ENCODE measurements at regions of chr17 and their contacts with region 1.

Region 1: DNA sequence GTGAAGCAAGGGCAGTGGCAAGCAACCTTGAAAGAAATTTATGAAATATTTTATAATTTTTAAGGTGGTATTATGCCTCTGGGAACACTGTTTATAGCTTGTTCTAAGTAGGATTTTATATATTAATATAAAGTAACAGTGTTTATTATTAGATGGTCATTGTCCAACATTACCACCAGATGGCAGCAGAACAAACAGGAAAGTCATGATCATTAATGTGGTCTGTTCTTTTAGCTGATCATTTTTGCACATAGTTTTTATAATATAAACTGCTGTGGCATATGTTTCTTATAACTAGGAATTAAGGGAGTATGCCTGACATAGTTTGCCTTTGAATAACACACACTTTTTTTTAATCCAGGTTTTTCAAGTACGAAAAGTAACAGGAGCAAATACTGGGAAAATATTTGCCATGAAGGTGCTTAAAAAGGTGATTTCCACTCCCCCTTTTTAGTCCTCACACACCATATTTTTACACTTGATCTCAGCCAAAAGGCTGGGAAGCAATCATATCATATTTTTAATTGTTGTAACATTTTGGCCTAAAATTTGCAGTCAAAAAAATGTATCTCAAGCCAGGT is 21.4 kb downstream of the RPS6KB1 start:
- DNase-seq: no peak
- ATAC-seq: peak; percentile 77
- H3K4me3 ChIP-seq: no peak overlapping the region
- H3K27ac ChIP-seq: no peak overlapping the region
- H3K4me1 ChIP-seq: no peaks in the 10 kb centered on the region
- H3K27me3 ChIP-seq: no peaks in the 10 kb centered on the region
- CTCF ChIP-seq: peak; percentile 42 to 54 (median 47); a peak in 5 of 6 replicates
- EP300 ChIP-seq: no peak
- POLR2A ChIP-seq: no peak
- RAD21 ChIP-seq: peak; percentile 53

Region 2: DNA sequence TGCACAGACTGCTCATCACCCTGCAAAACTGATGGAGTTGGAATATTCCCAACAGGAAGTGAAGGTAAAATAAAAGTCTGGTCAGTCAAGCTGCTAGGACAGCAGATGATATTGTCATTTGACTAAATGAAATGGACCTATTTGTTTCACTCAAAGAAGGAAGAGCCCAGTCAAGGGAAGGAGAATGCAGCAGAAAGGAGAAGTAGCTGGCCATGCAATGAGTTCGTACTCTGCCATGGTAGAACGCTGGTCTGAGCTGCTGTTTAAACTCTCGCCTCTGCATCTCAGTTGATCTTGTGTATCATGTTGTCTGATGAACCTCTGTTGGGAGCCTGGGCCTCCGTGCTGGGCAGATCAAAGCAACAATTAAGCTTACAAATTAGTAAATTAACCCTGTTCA is 598.5 kb before region 1 on chr17:
- CTCF ChIA-PET with region 1: no interaction called
- POLR2A ChIA-PET with region 1: no interaction called
- RAD21 ChIA-PET with region 1: no interaction called
- SMC1A ChIA-PET with region 1: no interaction called
- in situ Hi-C with region 1: no loop called
- intact Hi-C with region 1: no loop called
- DNase-seq: no peak
- ATAC-seq: no peak
- H3K4me3 ChIP-seq: no peak overlapping the region
- H3K27ac ChIP-seq: no peak overlapping the region
- H3K4me1 ChIP-seq: no peaks in the 10 kb centered on the region
- H3K27me3 ChIP-seq: no peaks in the 10 kb centered on the region
- CTCF ChIP-seq: no peak
- EP300 ChIP-seq: no peak
- POLR2A ChIP-seq: no peak
- RAD21 ChIP-seq: no peak

Region 3: GRCh38 chr17:59746849-59747445 is 167.4 kb before region 1 on chr17:
- CTCF ChIA-PET with region 1: interaction called, 49 read pairs
- POLR2A ChIA-PET with region 1: no interaction called
- RAD21 ChIA-PET with region 1: interaction called, 21 read pairs
- SMC1A ChIA-PET with region 1: interaction called, 40 read pairs
- in situ Hi-C with region 1: no loop called
- intact Hi-C with region 1: loop called (anchors 5 kb)
- DNase-seq: no peak
- ATAC-seq: peak; percentile 83
- H3K4me3 ChIP-seq: no peak overlapping the region
- H3K27ac ChIP-seq: no peak overlapping the region
- H3K4me1 ChIP-seq: peaks cover 4% of the 10 kb centered on the region
- H3K27me3 ChIP-seq: no peaks in the 10 kb centered on the region
- CTCF ChIP-seq: peak; percentile 47 to 65 (median 61)
- EP300 ChIP-seq: no peak
- POLR2A ChIP-seq: no peak
- RAD21 ChIP-seq: peak; percentile 82

Region 4: GRCh38 chr17:59899103-59899502 is 15.3 kb before region 1 on chr17:
- CTCF ChIA-PET with region 1: interaction called, 23 read pairs
- POLR2A ChIA-PET with region 1: no interaction called
- RAD21 ChIA-PET with region 1: no interaction called
- SMC1A ChIA-PET with region 1: interaction called, 7 read pairs
- in situ Hi-C with region 1: no loop called
- intact Hi-C with region 1: no loop called
- DNase-seq: no peak
- ATAC-seq: peak; percentile 89
- H3K4me3 ChIP-seq: no peak overlapping the region
- H3K27ac ChIP-seq: no peak overlapping the region
- H3K4me1 ChIP-seq: no peaks in the 10 kb centered on the region
- H3K27me3 ChIP-seq: no peaks in the 10 kb centered on the region
- CTCF ChIP-seq: peak; percentile 29 to 48 (median 41); a peak in 4 of 6 replicates
- EP300 ChIP-seq: no peak
- POLR2A ChIP-seq: no peak
- RAD21 ChIP-seq: no peak

Measured in GM12878 (cell line).